ENCODE measurements at regions of chr17 and their contacts with region 1.

Region 1: DNA sequence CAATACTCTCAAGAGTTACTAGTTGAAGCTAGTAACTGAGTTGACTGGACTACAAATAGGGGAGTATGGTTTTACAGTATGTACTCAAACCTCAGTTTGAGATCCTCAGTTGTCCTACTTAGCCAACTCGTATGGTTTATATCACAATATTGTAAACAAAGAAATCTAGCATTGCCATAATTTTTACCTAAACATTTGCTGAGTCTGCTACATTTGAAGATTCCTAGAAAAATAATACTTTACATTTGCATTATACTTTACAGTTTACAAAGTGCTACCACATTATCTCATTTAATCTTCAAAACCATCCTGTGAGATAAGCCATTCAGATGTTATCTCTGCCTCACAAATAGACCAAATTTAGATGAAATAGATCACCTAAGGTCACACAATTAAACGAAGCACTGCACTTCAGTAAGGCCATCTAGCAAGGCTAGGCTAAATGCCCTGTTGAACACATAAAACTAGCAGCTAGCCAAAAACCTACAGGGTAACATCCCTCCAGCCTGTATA is 16.3 kb downstream of the CBX1 start:
- DNase-seq: no peak
- ATAC-seq: no peak
- H3K4me3 ChIP-seq: no peak overlapping the region
- H3K27ac ChIP-seq: no peak overlapping the region
- H3K4me1 ChIP-seq: peaks cover 17% of the 10 kb centered on the region
- CTCF ChIP-seq: no peak
- EP300 ChIP-seq: no peak
- POLR2A ChIP-seq: no peak
- RAD21 ChIP-seq: no peak

Region 2: DNA sequence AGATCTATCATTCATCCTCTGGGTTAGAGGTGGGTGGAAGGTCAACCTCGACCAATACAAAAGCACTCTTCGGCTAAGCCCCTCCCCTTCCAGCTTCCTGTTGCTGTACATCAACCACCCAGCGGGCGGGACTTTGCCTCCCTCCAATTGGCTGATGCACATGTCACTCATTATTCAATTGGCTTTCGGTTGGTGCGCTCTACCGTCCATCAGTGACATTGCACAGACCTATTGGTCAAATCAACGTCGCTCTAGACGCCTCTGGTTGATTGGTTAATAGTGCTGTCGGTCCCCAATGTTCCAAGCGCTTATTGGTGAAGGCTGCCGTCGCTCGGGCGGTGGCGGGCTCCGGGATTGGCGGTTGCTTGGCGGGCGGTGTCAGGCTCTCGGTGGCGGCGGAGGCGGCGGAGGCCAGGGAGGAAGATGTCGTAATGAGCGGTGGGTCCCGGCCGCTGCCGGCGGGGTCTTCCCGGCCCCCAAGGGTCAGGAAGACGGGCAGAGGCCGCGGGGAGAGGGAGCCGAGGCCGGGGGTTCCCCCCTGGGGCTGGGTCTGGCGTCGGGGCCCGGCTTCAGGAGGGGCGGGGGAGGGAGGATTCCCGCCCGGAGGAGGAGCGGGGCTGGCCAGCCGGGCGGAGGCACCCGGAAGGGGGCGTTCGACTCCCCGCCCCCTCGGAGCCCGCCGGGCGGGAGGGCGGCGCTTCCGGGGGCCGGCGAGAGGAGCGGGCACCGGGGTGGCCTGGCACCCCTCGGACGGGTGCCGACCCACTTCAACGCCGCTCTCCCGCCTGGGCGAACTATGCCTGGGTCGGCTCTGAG is 188.9 kb before region 1 on chr17 and contains the start of gene SP2:
- CTCF ChIA-PET with region 1: no interaction called
- POLR2A ChIA-PET with region 1: no interaction called
- DNase-seq: peak; percentile 100
- ATAC-seq: peak; percentile 88 to 95
- H3K4me3 ChIP-seq: peak within 1 kb of the TSS; percentile 86
- H3K27ac ChIP-seq: peak within 1 kb of the TSS; percentile 95 to 96
- H3K4me1 ChIP-seq: peaks cover 16% of the 10 kb centered on the region; the same call in 2 of the 3 replicates
- CTCF ChIP-seq: no peak
- EP300 ChIP-seq: no peak
- POLR2A ChIP-seq: peak; percentile 91
- RAD21 ChIP-seq: no peak
- polyA plus RNA-seq, gene SP2: 6.2 and 8.0 TPM in 2 replicates

Region 3: DNA sequence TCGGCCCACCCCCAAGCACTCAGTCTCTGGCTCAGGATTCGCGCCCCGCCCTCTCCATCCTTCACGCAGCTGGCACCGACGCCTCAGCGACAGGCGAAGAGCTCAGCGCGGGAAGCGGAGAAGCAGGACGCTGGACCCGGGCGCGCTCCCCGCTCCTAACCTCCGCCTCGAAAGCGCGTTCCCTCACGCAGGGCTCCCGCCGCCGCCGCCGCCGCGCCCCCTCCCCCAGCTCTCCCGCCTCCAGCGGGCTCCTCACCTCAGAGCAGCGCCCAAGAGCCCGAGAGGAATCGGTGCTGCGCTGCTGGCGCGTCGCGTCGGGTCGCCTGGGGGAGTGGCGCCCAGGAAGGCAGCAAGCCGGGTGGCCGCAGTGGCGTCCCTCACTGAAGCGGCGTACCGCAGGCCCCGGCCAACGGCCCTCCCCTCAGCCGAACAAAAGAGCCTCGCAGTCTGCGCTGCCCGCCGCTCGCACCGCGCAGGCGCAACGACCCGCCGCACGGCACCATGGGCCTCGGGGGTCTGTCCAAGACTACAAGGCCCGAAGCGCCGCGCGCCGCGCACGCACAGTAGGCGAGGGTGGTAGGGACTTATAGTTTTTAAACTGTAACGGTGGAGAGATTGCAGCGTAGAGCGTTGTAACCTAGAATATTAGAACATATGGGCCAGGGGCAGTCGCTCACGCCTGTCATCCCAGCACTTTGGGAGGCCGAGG is 16.2 kb after region 1 on chr17 and contains the start of gene CBX1:
- CTCF ChIA-PET with region 1: interaction called, 152 read pairs
- POLR2A ChIA-PET with region 1: interaction called, 5 read pairs
- DNase-seq: peak; percentile 92 to 99
- ATAC-seq: peak; percentile 93 to 97
- H3K4me3 ChIP-seq: peak within 1 kb of the TSS; percentile 76
- H3K27ac ChIP-seq: peak within 1 kb of the TSS; percentile 89 to 90
- H3K4me1 ChIP-seq: peaks cover 20% of the 10 kb centered on the region
- CTCF ChIP-seq: no peak
- EP300 ChIP-seq: no peak
- POLR2A ChIP-seq: peak; percentile 68
- RAD21 ChIP-seq: no peak
- polyA plus RNA-seq, gene CBX1: 69.6 and 84.4 TPM in 2 replicates

Region 4: DNA sequence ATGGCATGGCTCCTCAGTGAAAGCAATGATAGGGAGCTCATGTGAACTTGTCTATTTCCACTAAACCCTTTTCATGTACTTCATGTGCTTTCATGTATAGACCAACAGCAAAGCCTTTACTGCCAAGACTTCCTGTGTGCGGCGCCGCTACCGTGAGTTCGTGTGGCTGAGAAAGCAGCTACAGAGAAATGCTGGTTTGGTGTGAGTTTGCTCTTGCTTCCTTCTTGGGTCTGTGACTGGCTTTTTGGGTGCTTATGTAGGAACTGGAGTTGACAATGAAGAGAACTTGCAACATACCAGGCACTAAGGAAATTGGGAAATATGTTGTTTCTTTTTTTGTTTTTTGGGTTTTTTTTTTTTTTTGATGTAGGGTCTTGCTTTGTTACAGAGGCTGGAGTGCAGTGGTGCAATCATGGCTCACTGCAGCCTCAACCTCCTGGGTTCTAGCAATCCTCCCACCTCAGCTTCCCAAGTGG is 28.3 kb after region 1 on chr17:
- CTCF ChIA-PET with region 1: interaction called, 19 read pairs
- POLR2A ChIA-PET with region 1: no interaction called
- DNase-seq: no peak
- ATAC-seq: no peak
- H3K4me3 ChIP-seq: no peak overlapping the region
- H3K27ac ChIP-seq: no peak overlapping the region
- H3K4me1 ChIP-seq: peaks cover 9% of the 10 kb centered on the region
- CTCF ChIP-seq: no peak
- EP300 ChIP-seq: no peak
- POLR2A ChIP-seq: no peak
- RAD21 ChIP-seq: no peak

Region 5: DNA sequence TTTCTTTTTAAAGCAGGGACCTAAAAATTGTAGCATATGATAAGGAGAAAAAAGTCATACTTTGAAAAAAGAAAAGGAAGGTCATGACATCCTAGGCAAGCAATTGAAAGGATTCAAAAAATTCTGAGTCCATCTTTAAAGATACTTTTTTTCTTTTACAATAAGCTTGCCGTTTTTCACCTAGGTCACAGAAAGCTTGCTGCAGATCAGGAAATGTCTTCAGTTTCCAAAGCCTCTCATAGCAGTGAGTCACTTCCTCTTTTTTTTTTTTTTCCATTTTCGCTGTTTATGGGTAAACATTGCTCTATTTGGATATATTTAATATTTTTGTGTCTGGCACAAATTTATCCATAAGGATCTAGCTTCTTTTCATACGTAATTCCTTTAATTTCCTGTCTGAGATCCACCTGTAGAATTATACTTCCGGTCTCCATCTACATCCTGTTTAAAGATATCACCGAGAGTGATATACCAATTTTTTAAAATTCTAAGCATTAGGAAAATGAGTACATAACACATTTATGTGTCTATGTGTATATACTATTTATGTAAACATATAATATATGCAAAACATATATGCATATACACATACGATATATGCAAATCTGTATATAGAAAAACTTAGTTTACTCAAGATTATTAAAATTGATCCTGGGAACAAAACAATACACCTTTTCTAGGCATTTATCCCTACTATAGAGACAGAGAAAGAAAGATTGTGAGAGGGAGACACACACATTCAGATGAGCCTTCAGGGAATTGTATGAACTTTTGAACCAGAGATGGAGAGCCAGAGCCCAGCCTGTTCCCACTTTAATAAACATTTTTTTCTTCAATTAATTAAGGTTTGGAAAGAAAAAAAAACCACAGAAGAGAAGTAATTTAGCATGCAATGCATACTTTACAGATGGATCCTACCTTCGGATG is 210.6 kb after region 1 on chr17:
- CTCF ChIA-PET with region 1: no interaction called
- POLR2A ChIA-PET with region 1: no interaction called
- DNase-seq: peak in 1 of 2 experiments; percentile 35
- ATAC-seq: peak in 1 of 2 experiments; percentile 45; a peak in 1 of 6 replicates
- H3K4me3 ChIP-seq: no peak overlapping the region
- H3K27ac ChIP-seq: peak overlapping the region; percentile 8 to 34; a peak in 5 of 6 replicates
- H3K4me1 ChIP-seq: peaks cover 23% of the 10 kb centered on the region
- CTCF ChIP-seq: no peak
- EP300 ChIP-seq: no peak
- POLR2A ChIP-seq: no peak
- RAD21 ChIP-seq: no peak

Measured in A549 (cell line).